Activated T-helper 1 cell treated with anti-CD3 and anti-CD28 coated beads, Interleukin-12 subunit alpha, Interleukin-12 subunit beta, Interleukin-2, Interleukin-4 antibody, amounts not matched to agents 30 ng/mL and 10 ng/mL and 1 ng/mL, durations not matched to agents 14 hours and 24 hours and 36 hours (primary cell): ENCODE measurements at regions of chr20 and their contacts with region 1.

Region 1: GRCh38 chr20:18412221-18412901 is 54.5 kb downstream of the DZANK1 start:
- DNase-seq: no peak
- H3K4me3 Mint-ChIP-seq: no peak overlapping the region
- H3K27ac Mint-ChIP-seq: no peak overlapping the region
- H3K4me1 Mint-ChIP-seq: peaks cover 6% of the 10 kb centered on the region
- H3K27me3 Mint-ChIP-seq: no peaks in the 10 kb centered on the region

Region 2: DNA sequence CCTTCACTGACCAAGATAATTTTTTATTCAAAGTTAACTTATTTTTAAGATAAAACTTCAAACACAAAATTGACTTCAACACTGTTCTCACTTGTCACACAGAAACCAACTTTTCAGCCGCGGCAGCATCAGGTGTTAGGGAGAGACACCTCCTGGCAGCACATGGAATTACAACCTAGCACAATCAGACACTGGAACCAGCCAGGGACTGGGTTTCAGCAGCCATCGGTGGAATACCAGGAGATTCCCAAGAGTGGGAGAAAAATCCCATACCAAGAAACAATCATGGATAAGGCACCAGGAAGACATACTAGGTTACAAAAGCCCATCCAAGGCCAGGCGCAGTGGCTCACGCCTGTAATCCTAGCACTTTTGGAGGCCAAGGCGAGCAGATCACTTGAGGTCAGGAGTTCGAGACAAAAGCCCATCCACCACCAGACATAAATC is 513.8 kb before region 1 on chr20:
- intact Hi-C with region 1: loop called (anchors 2 kb)
- DNase-seq: peak; percentile 44
- H3K4me3 Mint-ChIP-seq: no peak overlapping the region
- H3K27ac Mint-ChIP-seq: no peak overlapping the region
- H3K4me1 Mint-ChIP-seq: peaks cover 37% of the 10 kb centered on the region
- H3K27me3 Mint-ChIP-seq: peaks cover 17% of the 10 kb centered on the region

Region 3: GRCh38 chr20:18496740-18497592 is 84.6 kb after region 1 on chr20 and contains the start of gene RBBP9:
- intact Hi-C with region 1: loop called (anchors 2 kb)
- DNase-seq: peak; percentile 70
- H3K4me3 Mint-ChIP-seq: peak within 1 kb of the TSS; percentile 91
- H3K27ac Mint-ChIP-seq: peak within 1 kb of the TSS; percentile 64
- H3K4me1 Mint-ChIP-seq: peaks cover 16% of the 10 kb centered on the region
- H3K27me3 Mint-ChIP-seq: no peaks in the 10 kb centered on the region
- total RNA-seq, gene RBBP9: 18.6 and 18.7 TPM in 2 replicates

Region 4: GRCh38 chr20:18513208-18513607 is 100.8 kb after region 1 on chr20:
- intact Hi-C with region 1: no loop called
- DNase-seq: no peak
- H3K4me3 Mint-ChIP-seq: no peak overlapping the region
- H3K27ac Mint-ChIP-seq: no peak overlapping the region
- H3K4me1 Mint-ChIP-seq: peaks cover 36% of the 10 kb centered on the region
- H3K27me3 Mint-ChIP-seq: no peaks in the 10 kb centered on the region

Region 5: DNA sequence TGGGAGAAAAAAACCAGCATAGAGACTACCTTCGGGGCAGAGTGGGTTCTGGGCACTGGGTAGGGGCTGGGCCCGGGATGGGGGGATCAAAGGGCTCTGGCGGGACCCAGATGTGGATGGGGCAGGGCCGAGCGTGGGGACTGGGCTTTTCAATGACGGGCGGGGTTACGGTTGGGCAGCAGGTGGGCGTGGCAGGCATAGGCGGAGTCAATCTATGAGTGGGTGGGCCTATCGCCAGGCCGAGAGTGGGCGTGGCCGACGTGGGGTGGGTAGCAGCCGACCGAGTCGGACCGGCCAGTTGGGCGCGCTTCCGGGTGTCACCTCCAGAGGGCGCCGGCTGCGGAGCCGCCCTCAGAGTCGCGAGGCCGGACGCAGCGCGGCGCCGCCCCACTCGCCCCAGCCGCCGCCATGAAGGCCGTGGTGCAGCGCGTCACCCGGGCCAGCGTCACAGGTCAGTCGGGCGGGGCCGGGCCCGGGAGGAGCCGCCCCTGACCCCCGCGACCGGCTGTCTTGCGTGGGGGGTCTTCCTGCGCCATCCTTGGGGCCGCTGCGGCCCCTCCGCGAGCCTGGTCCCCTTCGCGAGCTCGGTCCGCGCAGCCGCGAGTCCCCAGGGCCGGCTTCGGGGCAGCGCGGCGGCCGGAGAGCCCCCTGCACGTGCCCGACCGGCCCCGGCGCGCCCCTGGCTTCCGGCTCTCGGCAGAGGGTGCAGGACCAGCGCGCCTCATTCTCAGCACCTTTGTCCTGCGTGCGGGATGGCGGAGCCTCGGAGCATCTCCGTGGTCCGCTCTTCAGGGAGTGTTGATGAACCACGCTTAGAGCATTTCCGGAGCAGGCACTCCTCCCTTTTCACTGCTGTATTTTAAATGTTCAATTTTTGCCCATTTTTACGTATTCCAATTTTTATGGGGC is 175.6 kb after region 1 on chr20 and contains the start of gene DTD1:
- intact Hi-C with region 1: loop called (anchors 2 kb)
- DNase-seq: peak; percentile 80
- H3K4me3 Mint-ChIP-seq: peak within 1 kb of the TSS; percentile 93
- H3K27ac Mint-ChIP-seq: peak within 1 kb of the TSS; percentile 82
- H3K4me1 Mint-ChIP-seq: peaks cover 25% of the 10 kb centered on the region
- H3K27me3 Mint-ChIP-seq: peaks cover 10% of the 10 kb centered on the region
- total RNA-seq, gene DTD1: 37.7 and 44.0 TPM in 2 replicates

Region 6: GRCh38 chr20:18793625-18794427 is 381.5 kb after region 1 on chr20:
- intact Hi-C with region 1: loop called (anchors 2 kb)
- DNase-seq: peak; percentile 80
- H3K4me3 Mint-ChIP-seq: peak overlapping the region; percentile 87
- H3K27ac Mint-ChIP-seq: peak overlapping the region; percentile 82
- H3K4me1 Mint-ChIP-seq: peaks cover 12% of the 10 kb centered on the region
- H3K27me3 Mint-ChIP-seq: no peaks in the 10 kb centered on the region